Dendritic cell treated with granulocyte-macrophage colony-stimulating factor and Interleukin-4, amounts not matched to agents 40 ng/mL and 50 ng/mL, for 4 days (primary cell): ENCODE measurements at regions of chr15 and their contacts with region 1.

Region 1: GRCh38 chr15:84955089-84955848 is 26.4 kb upstream of the PDE8A start:
- H3K4me3 Mint-ChIP-seq: peak overlapping the region; percentile 59
- H3K27ac Mint-ChIP-seq: no peak overlapping the region
- H3K4me1 Mint-ChIP-seq: peaks cover 27% of the 10 kb centered on the region
- H3K27me3 Mint-ChIP-seq: peaks cover 2% of the 10 kb centered on the region

Region 2: DNA sequence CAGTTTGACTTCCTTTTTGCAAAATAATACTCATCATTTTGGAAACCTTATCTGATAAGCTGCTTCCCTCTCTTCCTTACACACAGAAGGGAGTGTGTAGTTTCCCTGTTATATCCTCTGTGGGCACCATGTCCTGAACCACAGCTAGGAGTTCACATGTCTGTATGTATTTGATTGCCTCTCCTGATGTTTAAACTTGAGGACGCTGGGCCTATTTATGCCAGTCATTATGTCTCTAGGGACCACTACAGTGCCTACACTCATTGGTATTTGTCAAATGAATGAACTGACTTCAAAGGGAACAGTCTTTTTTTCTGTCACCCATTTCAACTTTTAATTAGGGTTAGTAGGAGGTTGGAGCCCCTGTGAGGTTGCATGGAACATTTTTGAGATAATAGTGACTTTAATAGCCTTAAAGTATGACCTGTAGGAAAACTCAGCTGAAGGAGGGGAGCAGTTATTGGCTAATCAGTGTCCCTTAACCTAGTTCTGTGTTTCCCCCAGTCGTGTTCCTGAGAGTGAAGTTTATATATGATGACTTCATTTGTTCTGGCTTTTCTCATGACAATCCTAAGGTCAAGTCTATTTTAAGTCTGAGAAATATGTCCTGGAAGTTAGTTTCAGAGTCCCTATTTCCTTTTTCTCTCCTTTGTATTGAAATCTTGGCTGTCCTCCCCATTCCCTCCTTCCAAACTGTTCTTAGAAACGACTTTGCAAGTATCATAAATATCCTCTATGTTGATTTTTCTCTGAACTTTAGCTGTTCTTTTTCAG is 55.3 kb after region 1 on chr15:
- intact Hi-C with region 1: loop called (anchors 1 kb)
- H3K4me3 Mint-ChIP-seq: no peak overlapping the region
- H3K27ac Mint-ChIP-seq: peak overlapping the region; percentile 35
- H3K4me1 Mint-ChIP-seq: peaks cover 66% of the 10 kb centered on the region
- H3K27me3 Mint-ChIP-seq: no peaks in the 10 kb centered on the region

Region 3: DNA sequence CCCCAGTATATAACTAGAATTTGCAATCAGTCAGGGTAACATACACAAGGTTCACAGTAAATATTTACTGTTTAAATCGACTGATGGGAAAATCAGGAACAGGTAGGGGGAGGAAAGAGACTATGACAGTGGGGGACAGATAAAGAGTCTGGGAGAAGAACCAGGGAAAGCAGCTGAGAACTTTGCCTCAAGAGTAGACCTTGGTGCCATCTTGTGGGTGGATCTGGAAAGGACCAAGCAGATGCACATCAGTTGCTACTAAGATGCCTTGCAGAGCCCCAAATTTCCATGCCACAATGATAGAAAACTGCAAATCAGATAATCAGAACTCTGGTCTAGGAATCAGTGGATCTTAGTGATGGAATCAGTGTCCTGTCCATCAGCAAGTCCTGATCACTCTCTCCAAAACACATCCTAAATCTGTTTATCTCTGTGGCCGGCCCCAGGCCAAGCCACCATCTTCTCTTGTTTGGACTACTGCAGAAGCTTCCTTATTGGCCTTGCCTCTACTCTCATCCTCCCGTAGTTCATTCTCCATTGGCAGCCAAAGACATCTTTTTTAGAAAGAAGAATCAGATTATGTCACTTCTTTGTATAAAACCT is 89.1 kb after region 1 on chr15:
- intact Hi-C with region 1: loop called (anchors 1 kb)
- H3K4me3 Mint-ChIP-seq: no peak overlapping the region
- H3K27ac Mint-ChIP-seq: no peak overlapping the region
- H3K4me1 Mint-ChIP-seq: peaks cover 12% of the 10 kb centered on the region
- H3K27me3 Mint-ChIP-seq: no peaks in the 10 kb centered on the region